OCI-LY7 (cell line): ENCODE measurements at regions of chr2 and their contacts with region 1.

Region 1: GRCh38 chr2:174465327-174465726 is 21.5 kb downstream of the GPR155 start:
- DNase-seq: no peak
- H3K4me3 ChIP-seq: no peak overlapping the region
- H3K27ac ChIP-seq: no peak overlapping the region
- H3K4me1 ChIP-seq: no peaks in the 10 kb centered on the region
- CTCF ChIP-seq: no peak

Region 2: DNA sequence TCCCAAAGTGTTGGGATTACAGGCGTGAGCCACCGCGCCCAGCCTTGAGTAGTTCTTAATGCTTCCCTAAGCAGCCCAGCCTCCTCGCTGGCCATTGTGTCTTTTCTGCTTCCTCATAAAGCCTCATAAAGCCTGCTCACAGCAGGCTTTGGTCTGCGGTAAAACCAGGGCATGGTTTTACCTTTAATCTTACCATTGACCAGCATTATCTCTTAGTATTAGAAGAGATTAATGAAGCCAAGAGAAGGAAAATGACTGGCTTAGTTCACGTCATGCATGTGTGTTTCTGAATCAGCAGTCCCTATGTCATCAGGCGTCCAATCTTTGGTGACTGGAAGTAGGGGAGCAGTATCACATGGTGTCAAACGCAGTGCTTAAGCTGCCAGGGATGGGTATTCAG is 1125.5 kb before region 1 on chr2:
- CTCF ChIA-PET with region 1: no interaction called
- POLR2A ChIA-PET with region 1: no interaction called
- intact Hi-C with region 1: no loop called
- DNase-seq: no peak
- H3K4me3 ChIP-seq: no peak overlapping the region
- H3K27ac ChIP-seq: no peak overlapping the region
- H3K4me1 ChIP-seq: no peaks in the 10 kb centered on the region
- CTCF ChIP-seq: no peak

Region 3: GRCh38 chr2:174326161-174327020 is 138.9 kb before region 1 on chr2:
- CTCF ChIA-PET with region 1: no interaction called
- POLR2A ChIA-PET with region 1: no interaction called
- intact Hi-C with region 1: no loop called
- DNase-seq: no peak
- H3K4me3 ChIP-seq: peak overlapping the region; percentile 41
- H3K27ac ChIP-seq: no peak overlapping the region
- H3K4me1 ChIP-seq: no peaks in the 10 kb centered on the region
- CTCF ChIP-seq: no peak

Region 4: DNA sequence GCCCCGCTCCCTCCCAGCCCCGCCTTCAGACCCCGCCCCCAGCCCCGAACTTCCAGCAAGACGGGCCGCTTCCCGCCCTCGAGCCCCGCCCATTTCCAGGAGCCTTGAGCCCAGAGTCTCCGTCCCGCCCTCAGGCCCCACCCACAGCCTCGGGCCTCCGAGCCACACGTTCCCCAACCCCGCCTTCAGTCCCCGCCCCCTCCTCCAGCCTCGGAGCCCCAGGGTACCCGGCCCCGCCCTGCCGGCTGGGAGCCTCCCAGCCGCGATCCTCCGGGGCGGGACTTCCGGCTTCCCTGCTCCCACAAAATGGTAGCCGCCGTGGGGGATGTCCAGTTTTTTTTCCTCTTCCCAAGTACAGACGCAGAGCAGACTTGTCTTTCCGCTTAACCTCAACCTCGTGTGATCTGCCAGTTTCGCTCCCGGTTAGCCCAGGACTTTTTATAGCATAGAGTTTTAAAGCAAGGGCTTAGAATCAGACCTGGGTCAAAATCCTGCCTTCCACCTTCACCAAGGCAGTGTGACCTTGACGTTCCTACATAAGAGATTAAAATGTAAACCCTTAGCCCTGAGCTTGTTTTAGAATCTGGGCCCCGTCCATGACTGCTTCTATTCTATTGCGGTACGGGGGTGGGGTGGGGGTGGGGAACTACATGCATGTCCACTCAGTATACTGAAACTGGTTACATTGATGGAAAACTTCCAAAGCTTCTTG is 21.9 kb after region 1 on chr2:
- CTCF ChIA-PET with region 1: interaction called, 3 read pairs
- POLR2A ChIA-PET with region 1: interaction called, 10 read pairs
- intact Hi-C with region 1: no loop called
- DNase-seq: peak; percentile 98
- H3K4me3 ChIP-seq: peak overlapping the region; percentile 83
- H3K27ac ChIP-seq: peak overlapping the region; percentile 26
- H3K4me1 ChIP-seq: peaks cover 18% of the 10 kb centered on the region
- CTCF ChIP-seq: no peak

Region 5: GRCh38 chr2:174522553-174522952 is 57.2 kb after region 1 on chr2:
- CTCF ChIA-PET with region 1: no interaction called
- POLR2A ChIA-PET with region 1: no interaction called
- intact Hi-C with region 1: loop called (anchors 1 kb)
- DNase-seq: peak; percentile 14
- H3K4me3 ChIP-seq: no peak overlapping the region
- H3K27ac ChIP-seq: no peak overlapping the region
- H3K4me1 ChIP-seq: no peaks in the 10 kb centered on the region
- CTCF ChIP-seq: peak; percentile 65

Region 6: DNA sequence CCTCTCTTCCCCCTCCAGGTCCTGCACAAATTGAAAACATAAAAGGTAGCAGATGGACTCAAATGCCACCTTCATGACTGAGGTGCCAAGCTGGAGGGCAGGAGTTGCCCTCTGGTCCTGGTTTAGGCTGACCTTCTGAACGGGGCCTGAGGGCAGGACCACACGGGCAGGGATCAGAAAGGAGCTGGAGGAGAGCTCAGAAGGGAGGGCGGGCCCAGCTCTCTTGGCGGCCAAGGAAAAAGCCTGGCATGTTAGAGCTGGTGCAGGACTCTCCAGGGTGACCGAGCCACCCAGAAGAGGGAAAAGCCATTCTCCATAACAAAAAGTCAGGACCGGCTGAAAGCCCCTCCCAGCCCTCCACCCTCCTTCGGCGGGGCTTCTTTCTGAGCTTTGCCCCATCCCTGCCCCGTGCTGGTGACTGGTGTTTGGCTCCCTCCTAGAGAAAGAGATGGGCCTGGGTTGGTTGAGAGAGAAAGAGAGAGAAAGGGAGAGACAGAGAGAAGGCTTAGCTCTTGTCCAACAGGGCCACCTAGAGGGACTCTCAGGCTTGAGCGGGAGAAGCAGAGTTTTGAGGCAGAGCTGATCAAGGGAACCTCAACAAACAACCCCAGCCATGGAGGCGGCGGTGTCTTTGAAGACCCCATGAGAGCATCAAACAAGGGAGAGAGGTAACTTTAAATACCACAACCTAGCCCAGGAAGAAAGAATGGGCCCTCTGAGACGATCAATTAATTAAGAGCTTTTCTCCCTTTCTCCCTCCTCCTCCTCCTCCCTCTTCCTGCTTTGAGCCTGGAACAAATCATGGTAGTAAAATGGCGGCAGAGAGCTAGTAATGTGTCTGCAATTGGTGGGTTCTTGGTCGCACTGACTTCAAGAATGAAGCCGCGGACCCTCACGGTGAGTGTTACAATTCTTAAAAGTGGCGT is 81.5 kb after region 1 on chr2:
- CTCF ChIA-PET with region 1: interaction called, 8 read pairs
- POLR2A ChIA-PET with region 1: interaction called, 6 read pairs
- intact Hi-C with region 1: loop called (anchors 1 kb)
- DNase-seq: peak; percentile 57
- H3K4me3 ChIP-seq: no peak overlapping the region
- H3K27ac ChIP-seq: no peak overlapping the region
- H3K4me1 ChIP-seq: no peaks in the 10 kb centered on the region
- CTCF ChIP-seq: peak; percentile 74

Region 7: DNA sequence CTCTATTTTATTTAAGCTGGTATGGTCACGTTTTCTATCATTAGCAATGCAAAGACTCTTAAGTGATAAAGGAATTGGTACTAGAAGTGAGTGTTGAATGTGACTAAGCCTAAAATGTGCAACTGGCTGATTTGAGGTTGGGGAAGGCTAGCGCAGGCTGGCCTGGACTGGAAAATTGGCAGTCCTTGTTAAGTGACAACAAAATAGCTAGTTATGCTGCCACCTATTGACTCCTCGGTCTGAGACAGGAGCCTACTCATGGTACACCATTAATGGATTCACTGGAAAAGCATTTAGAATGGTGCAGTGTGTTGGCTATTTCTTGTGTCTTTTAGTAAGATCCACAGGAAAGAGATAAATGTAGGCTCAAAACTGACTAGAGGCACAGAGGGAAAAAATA is 138.0 kb after region 1 on chr2:
- CTCF ChIA-PET with region 1: no interaction called
- POLR2A ChIA-PET with region 1: no interaction called
- intact Hi-C with region 1: loop called (anchors 1 kb)
- DNase-seq: peak; percentile 74
- H3K4me3 ChIP-seq: no peak overlapping the region
- H3K27ac ChIP-seq: no peak overlapping the region
- H3K4me1 ChIP-seq: peaks cover 79% of the 10 kb centered on the region
- CTCF ChIP-seq: peak; percentile 88

Region 8: DNA sequence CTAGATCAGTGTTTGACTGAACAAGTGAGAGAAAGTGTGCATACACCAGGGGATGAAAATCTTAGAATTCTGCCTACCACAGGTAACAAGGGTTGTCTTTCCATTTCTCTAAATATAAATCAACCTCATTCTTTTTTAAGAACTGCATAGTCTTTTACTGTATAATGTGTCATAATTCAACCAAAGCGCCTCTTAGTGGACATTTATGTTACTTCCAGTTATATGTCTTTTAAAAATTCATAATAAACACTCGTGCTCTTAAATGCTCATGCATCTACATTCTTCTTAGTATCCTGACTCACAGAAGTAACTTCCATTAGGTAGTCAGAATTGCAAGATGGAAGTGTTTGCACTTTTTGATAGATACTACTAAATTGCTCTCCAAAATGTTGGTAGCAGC is 222.8 kb after region 1 on chr2:
- CTCF ChIA-PET with region 1: interaction called, 3 read pairs
- POLR2A ChIA-PET with region 1: interaction called, 6 read pairs
- intact Hi-C with region 1: loop called (anchors 2 kb)
- DNase-seq: peak; percentile 61
- H3K4me3 ChIP-seq: no peak overlapping the region
- H3K27ac ChIP-seq: no peak overlapping the region
- H3K4me1 ChIP-seq: no peaks in the 10 kb centered on the region
- CTCF ChIP-seq: peak; percentile 88

Region 9: DNA sequence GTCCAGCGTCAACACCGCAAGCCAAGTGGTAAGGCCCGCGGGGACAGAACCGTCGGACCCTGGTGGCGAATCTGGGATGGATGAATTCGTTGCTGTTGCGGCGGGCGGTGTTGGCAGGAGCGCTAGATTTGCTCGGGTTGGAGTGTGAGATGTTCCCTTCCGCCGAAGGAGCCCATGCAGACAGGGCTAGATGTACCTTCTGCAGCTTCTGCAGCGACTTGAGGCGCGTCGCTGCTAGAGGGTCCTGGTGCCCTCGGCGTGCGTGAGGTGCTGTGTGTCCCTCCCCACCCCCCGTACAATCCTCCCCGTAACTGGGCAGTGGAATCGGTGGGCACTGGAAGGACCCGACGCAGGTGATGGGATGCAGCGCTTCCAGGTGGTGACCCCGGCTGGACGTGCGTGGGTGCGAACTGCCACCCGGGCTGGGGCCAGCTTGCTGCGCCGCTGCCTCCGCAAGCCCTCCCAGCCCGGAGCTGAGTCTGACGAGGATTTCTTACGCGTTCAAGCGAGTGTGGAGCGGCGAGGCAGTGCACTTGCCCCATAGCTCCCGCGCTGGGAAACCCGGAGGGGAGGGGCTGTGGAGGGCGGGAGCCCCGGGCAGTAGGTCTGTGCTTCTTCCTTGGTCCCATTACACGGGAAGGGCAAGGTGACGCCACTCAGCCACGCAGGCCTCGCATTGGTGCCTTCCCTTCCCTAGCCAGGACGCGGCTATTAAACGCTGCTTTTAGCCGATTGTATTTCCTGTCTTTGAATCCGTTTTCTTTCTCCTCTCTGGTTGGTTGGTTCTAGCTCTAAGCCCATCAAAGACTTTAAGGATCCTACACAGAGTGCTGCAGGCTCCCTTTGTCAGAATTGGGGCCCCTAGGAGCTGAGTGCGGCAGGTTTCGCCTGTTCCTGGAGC is 264.7 kb after region 1 on chr2:
- CTCF ChIA-PET with region 1: no interaction called
- POLR2A ChIA-PET with region 1: no interaction called
- intact Hi-C with region 1: no loop called
- DNase-seq: no peak
- H3K4me3 ChIP-seq: no peak overlapping the region
- H3K27ac ChIP-seq: no peak overlapping the region
- H3K4me1 ChIP-seq: no peaks in the 10 kb centered on the region
- CTCF ChIP-seq: no peak